Activated T-helper 2 cell treated with anti-CD3 and anti-CD28 coated beads, Interferon-gamma antibody, Interleukin-2, Interleukin-4, amounts not matched to agents 10 μg/mL and 5 μg/mL and 100 μg/mL, durations not matched to agents 14 hours and 24 hours and 36 hours (primary cell): ENCODE measurements at regions of chr13 and their contacts with region 1.

Region 1: DNA sequence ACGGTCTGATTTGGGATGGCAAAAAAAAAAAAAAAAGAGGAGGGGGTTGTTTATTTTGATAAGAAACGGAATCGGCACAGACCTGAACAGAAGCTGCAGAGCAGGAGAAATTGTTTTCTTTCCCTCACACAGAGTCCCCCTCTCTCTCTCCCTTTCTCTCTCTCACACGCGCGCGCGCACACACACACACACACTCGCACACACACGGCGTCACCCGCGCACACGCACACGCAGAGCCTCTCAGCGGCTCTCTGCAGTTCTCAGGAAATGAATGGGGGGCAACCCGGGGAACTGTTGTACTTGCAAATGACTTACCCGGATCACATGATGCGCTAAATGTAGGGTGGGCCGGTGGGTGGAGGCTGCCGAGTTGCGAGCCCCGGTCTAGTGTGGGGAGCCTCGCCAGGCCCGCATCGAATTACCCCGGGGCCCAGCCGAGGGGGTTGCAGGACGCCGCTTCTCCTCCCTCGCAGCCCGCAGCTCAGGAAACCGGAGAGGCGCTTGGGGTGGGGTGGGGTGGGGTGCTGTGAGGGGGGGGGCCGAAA is 475 bp downstream of the KLF12 start:
- DNase-seq: peak; percentile 82
- H3K4me3 Mint-ChIP-seq: peak overlapping the region; percentile 97
- H3K27ac Mint-ChIP-seq: peak overlapping the region; percentile 99
- H3K4me1 Mint-ChIP-seq: peaks cover 32% of the 10 kb centered on the region
- H3K27me3 Mint-ChIP-seq: peaks cover 8% of the 10 kb centered on the region

Region 2: GRCh38 chr13:73058736-73059459 is 1074.8 kb before region 1 on chr13 and contains the start of gene KLF5:
- intact Hi-C with region 1: loop called (anchors 5 kb)
- DNase-seq: peak; percentile 95
- H3K4me3 Mint-ChIP-seq: peak within 1 kb of the TSS; percentile 80
- H3K27ac Mint-ChIP-seq: peak within 1 kb of the TSS; percentile 49
- H3K4me1 Mint-ChIP-seq: peaks cover 12% of the 10 kb centered on the region
- H3K27me3 Mint-ChIP-seq: peaks cover 63% of the 10 kb centered on the region
- total RNA-seq, gene KLF5: 1.3 and 2.0 TPM in 2 replicates

Region 3: DNA sequence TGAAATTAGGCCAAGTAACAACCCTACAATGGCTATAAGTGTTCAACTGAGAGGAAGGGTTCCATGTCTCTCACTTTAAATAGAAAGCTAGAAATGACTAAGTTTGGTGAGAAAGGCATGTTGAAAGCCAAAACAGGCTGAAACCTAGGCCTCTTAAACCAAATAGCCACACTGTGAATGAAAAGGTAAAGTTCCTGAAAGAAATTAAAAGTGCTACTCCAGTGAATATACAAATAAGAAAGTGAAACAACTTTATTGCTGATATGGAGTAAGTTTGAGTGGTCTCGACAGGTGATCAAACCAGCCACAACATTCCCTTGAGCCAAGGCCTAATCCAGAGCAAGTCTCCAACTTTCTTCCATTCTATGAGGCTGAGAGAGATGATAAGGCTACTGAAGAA is 209.1 kb before region 1 on chr13:
- intact Hi-C with region 1: loop called (anchors 2 kb)
- DNase-seq: no peak
- H3K4me3 Mint-ChIP-seq: no peak overlapping the region
- H3K27ac Mint-ChIP-seq: peak overlapping the region; percentile 72
- H3K4me1 Mint-ChIP-seq: peaks cover 58% of the 10 kb centered on the region
- H3K27me3 Mint-ChIP-seq: no peaks in the 10 kb centered on the region

Region 4: GRCh38 chr13:74062933-74063332 is 70.8 kb before region 1 on chr13:
- intact Hi-C with region 1: loop called (anchors 1 kb)
- DNase-seq: no peak
- H3K4me3 Mint-ChIP-seq: peak overlapping the region; percentile 79
- H3K27ac Mint-ChIP-seq: peak overlapping the region; percentile 93
- H3K4me1 Mint-ChIP-seq: peaks cover 64% of the 10 kb centered on the region
- H3K27me3 Mint-ChIP-seq: no peaks in the 10 kb centered on the region

Region 5: GRCh38 chr13:74243637-74244526 is 110.2 kb after region 1 on chr13:
- intact Hi-C with region 1: loop called (anchors 2 kb)
- DNase-seq: no peak
- H3K4me3 Mint-ChIP-seq: peak overlapping the region; percentile 11
- H3K27ac Mint-ChIP-seq: peak overlapping the region; percentile 73
- H3K4me1 Mint-ChIP-seq: peaks cover 46% of the 10 kb centered on the region
- H3K27me3 Mint-ChIP-seq: peaks cover 15% of the 10 kb centered on the region

Region 6: DNA sequence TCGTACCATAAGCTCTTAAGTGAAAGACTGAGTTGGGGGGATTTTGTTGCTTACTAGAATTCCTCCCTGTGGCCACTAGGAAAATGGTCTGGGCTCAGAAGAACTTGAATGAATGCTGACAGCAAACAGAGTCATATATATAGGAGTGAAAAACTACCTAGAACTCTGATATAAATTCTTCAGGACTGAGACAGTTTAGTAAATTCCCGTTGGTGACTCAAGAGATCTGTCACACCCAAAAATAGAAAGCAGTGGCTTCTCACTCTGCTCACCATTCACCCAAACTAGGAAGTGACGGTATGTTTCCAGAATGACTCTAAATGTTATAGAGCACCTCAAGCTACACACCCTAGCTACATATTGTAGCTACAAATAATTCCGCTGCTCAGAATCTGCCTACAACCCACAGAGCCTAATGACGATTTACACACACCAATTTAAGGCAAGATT is 1232.0 kb after region 1 on chr13:
- intact Hi-C with region 1: loop called (anchors 10 kb)
- DNase-seq: peak; percentile 22
- H3K4me3 Mint-ChIP-seq: peak overlapping the region; percentile 59
- H3K27ac Mint-ChIP-seq: peak overlapping the region; percentile 95
- H3K4me1 Mint-ChIP-seq: peaks cover 46% of the 10 kb centered on the region
- H3K27me3 Mint-ChIP-seq: no peaks in the 10 kb centered on the region